ENCODE measurements at regions of chr3 and their contacts with region 1.

Region 1: GRCh38 chr3:143972505-143973255 is 1.1 kb downstream of the DIPK2A start:
- DNase-seq: peak; percentile 81
- H3K4me3 Mint-ChIP-seq: peak overlapping the region; percentile 91
- H3K27ac Mint-ChIP-seq: peak overlapping the region; percentile 87
- H3K4me1 Mint-ChIP-seq: peaks cover 26% of the 10 kb centered on the region
- H3K27me3 Mint-ChIP-seq: no peaks in the 10 kb centered on the region
- CTCF ChIP-seq: peak; percentile 48

Region 2: DNA sequence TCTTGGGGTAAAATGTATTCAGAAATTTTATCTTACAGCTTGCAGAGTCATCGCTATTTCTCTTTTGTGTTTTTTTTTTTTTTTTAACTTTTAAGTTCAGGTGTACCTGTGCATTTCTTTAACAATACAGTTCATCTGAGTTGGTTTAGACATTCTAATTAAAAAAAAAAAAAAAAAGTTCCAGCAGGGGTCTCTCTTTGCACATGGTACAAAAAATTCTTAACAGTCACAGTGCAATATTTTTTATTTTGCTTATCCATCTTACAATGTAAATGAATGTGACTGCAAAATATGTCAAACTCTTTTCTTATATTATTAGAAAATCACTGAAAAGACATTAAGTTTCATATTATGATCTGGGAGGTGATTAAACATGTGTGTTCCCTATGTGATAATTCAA is 76.9 kb before region 1 on chr3:
- CTCF ChIA-PET with region 1: no interaction called
- intact Hi-C with region 1: loop called (anchors 5 kb)
- DNase-seq: no peak
- H3K4me3 Mint-ChIP-seq: no peak overlapping the region
- H3K27ac Mint-ChIP-seq: no peak overlapping the region
- H3K4me1 Mint-ChIP-seq: peaks cover 9% of the 10 kb centered on the region
- H3K27me3 Mint-ChIP-seq: no peaks in the 10 kb centered on the region
- CTCF ChIP-seq: peak; percentile 36

Region 3: DNA sequence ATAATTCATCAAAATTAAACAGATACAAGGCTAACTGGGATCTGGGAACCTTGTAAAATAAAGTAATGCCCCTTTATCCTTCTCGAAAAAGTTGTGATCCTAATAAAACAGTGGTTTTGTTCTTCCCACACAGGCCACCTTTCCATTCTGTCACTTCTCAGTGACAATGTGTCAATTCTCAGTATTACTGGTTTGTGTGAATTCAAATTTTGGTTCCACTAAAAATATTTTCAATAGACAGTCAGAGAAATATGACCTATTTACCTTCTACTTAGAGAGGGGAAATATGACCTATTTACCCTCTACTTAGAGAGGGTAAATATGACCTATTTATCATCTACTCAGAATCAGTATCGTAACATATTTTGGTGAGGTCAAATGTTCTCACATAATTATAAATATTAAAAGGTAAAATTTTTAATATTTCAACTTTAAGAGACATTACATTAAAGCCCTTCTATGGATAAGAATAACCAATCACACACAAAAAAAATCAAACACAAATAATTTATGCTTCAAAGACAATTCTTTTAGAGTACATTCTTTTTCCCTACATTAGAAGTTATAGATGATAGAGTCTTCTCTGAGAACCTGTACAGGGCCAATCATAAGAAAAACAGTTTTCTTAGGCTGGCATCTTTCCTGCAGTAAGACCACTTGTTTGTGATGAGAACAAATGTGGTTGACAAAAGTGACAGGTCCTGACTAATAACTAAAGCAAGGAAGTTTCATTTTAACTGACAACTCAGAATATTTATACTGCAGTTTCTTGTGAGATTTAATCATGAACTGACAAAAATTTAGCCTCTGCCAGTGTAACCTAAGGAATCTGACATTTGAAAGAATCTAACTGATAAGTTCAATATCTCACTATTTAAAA is 322.2 kb after region 1 on chr3:
- CTCF ChIA-PET with region 1: interaction called, 5 read pairs
- intact Hi-C with region 1: loop called (anchors 5 kb)
- DNase-seq: no peak
- H3K4me3 Mint-ChIP-seq: peak overlapping the region; percentile 33
- H3K27ac Mint-ChIP-seq: peak overlapping the region; percentile 69
- H3K4me1 Mint-ChIP-seq: peaks cover 29% of the 10 kb centered on the region
- H3K27me3 Mint-ChIP-seq: no peaks in the 10 kb centered on the region
- CTCF ChIP-seq: no peak

Region 4: DNA sequence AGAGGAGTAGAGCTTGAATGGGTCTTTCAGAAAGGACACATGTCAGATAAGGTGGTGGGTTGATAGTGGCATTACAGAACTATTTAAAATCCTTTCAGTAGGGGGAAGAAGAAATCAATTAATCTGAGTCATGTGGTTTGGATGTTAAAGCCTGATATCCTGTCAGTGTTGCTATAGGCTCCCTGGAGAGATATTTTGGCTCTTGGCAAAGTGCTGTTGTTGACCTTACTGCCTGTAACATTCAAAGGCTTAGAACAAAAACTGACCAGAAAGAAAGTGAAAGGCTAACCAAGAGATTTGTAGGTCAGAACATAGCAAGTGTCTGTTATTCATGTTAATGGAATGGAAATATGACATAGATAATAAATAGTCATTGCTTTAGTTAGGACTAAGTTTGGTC is 551.9 kb after region 1 on chr3:
- CTCF ChIA-PET with region 1: interaction called, 4 read pairs
- intact Hi-C with region 1: loop called (anchors 10 kb)
- DNase-seq: no peak
- H3K4me3 Mint-ChIP-seq: no peak overlapping the region
- H3K27ac Mint-ChIP-seq: no peak overlapping the region
- H3K4me1 Mint-ChIP-seq: no peaks in the 10 kb centered on the region
- H3K27me3 Mint-ChIP-seq: no peaks in the 10 kb centered on the region
- CTCF ChIP-seq: no peak

Region 5: DNA sequence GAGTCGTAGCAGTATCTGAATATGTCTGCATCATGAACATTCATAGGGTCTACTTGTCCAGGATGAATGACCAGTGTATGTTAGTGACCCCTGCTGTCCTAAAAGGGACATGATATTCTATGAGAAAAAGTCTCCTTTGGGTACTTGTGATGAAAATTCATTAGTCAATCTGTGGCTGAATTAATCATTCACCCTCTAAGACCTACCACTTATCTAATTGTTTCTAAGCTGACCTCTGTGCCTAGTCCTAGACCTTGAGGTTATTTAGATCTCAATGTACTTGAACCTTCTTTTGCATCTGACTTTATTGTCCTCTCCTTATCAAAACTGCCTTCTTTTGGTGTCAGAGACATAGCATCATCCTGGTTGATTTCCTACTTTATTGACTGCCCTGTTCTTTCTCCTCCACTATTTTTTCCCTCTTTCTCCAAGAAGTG is 798.3 kb after region 1 on chr3:
- CTCF ChIA-PET with region 1: interaction called, 5 read pairs
- intact Hi-C with region 1: loop called (anchors 1 kb)
- DNase-seq: peak; percentile 55
- H3K4me3 Mint-ChIP-seq: no peak overlapping the region
- H3K27ac Mint-ChIP-seq: no peak overlapping the region
- H3K4me1 Mint-ChIP-seq: no peaks in the 10 kb centered on the region
- H3K27me3 Mint-ChIP-seq: no peaks in the 10 kb centered on the region
- CTCF ChIP-seq: no peak

Measured in Calu3 (cell line).